Activated naive CD4-positive, alpha-beta T cell treated with anti-CD3 and anti-CD28 coated beads for 36 hours (primary cell): ENCODE measurements at regions of chr14 and their contacts with region 1.

Region 1: DNA sequence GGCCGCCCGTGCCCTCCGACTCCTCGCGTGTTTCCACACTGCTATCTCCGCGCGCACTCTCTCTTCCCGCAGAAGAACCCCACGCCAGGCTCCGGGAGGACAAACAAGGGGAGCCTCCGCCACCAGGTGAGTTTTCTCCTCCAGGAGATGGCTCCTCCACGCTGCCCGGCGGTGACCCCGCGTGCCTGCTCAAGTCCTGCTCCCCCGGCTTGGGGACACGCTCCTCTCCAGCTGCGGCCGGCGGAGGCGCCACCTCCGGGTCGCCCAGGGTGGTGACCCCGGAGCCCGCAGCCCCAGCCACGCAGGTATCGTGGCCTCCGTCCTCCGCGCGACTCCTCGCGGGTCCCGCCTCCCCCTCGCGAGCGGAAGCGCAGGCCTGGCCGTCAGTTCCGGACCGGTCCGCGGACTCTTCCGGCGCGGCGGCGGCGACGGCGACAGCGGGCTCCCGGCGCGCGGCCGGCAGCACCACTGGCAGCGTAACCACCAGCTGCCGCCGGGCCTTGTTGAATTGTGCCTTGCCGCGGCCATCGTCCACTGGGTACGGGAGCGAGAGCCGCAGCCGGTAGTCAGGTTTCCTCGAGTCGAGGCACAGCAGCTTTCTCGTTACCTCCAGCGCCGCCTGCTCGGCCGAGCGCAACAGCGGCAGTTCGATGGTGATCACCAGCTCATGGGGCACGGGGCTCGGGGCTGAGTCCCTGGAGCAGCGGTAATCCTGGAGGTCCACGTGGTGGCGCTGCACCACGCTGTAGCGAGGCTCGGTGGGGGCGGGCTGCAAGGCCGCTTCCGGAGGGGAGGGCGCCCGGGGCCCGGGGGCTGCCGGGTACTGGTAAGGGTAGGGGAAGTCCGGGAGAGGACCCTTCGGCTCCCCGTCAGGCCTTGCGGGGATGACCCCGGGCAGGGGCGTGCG is 1.2 kb downstream of the DNAAF2 start:
- DNase-seq: peak; percentile 96
- H3K4me3 Mint-ChIP-seq: peak overlapping the region; percentile 96
- H3K27ac Mint-ChIP-seq: peak overlapping the region; percentile 92
- H3K4me1 Mint-ChIP-seq: peaks cover 50% of the 10 kb centered on the region
- H3K27me3 Mint-ChIP-seq: no peaks in the 10 kb centered on the region

Region 2: DNA sequence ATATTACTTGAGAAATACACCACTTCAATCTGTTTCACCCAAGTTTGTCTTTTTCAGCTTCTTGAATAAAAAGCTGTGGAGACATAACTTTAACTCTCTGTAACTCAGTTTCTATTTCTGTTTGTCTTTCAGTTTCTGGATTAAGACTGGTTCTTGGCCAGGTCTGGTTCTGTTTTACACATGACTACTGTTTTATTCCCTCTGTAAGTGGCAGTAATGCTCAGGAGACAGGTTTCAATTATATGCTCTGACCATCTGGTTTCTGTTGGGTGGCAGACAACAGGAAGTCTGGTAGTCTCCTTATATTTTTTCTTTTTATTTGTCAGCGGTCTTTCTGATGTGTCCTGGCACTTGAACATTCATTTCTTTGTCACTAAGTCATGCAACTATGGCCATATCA is 150.6 kb before region 1 on chr14:
- CTCF ChIA-PET with region 1: no interaction called
- intact Hi-C with region 1: no loop called
- DNase-seq: no peak
- H3K4me3 Mint-ChIP-seq: no peak overlapping the region
- H3K27ac Mint-ChIP-seq: no peak overlapping the region
- H3K4me1 Mint-ChIP-seq: peaks cover 6% of the 10 kb centered on the region
- H3K27me3 Mint-ChIP-seq: peaks cover 3% of the 10 kb centered on the region

Region 3: GRCh38 chr14:49585803-49586672 is 47.9 kb before region 1 on chr14 and contains the start of gene RPS29:
- CTCF ChIA-PET with region 1: interaction called, 5 read pairs
- intact Hi-C with region 1: loop called (anchors 1 kb)
- DNase-seq: peak; percentile 99
- H3K4me3 Mint-ChIP-seq: peak within 1 kb of the TSS; percentile 87
- H3K27ac Mint-ChIP-seq: peak within 1 kb of the TSS; percentile 98
- H3K4me1 Mint-ChIP-seq: peaks cover 40% of the 10 kb centered on the region
- H3K27me3 Mint-ChIP-seq: peaks cover 3% of the 10 kb centered on the region
- total RNA-seq, gene RPS29: 1,858 to 2,382 TPM

Region 4: GRCh38 chr14:49607583-49607982 is 26.3 kb before region 1 on chr14:
- CTCF ChIA-PET with region 1: no interaction called
- intact Hi-C with region 1: no loop called
- DNase-seq: no peak
- H3K4me3 Mint-ChIP-seq: no peak overlapping the region
- H3K27ac Mint-ChIP-seq: no peak overlapping the region
- H3K4me1 Mint-ChIP-seq: peaks cover 7% of the 10 kb centered on the region
- H3K27me3 Mint-ChIP-seq: no peaks in the 10 kb centered on the region

Region 5: GRCh38 chr14:49692811-49693734 is 59.2 kb after region 1 on chr14 and contains the start of gene KLHDC1:
- CTCF ChIA-PET with region 1: interaction called, 5 read pairs
- intact Hi-C with region 1: loop called (anchors 1 kb)
- DNase-seq: peak; percentile 84
- H3K4me3 Mint-ChIP-seq: peak within 1 kb of the TSS; percentile 81
- H3K27ac Mint-ChIP-seq: peak within 1 kb of the TSS; percentile 62
- H3K4me1 Mint-ChIP-seq: peaks cover 34% of the 10 kb centered on the region
- H3K27me3 Mint-ChIP-seq: no peaks in the 10 kb centered on the region
- total RNA-seq, gene KLHDC1: 0.57 to 0.79 TPM

Region 6: GRCh38 chr14:49852301-49853157 is 218.6 kb after region 1 on chr14 and contains the start of gene NEMF:
- CTCF ChIA-PET with region 1: interaction called, 42 read pairs
- intact Hi-C with region 1: loop called (anchors 1 kb)
- DNase-seq: peak; percentile 90
- H3K4me3 Mint-ChIP-seq: peak within 1 kb of the TSS; percentile 98
- H3K27ac Mint-ChIP-seq: peak within 1 kb of the TSS; percentile 97
- H3K4me1 Mint-ChIP-seq: peaks cover 37% of the 10 kb centered on the region
- H3K27me3 Mint-ChIP-seq: no peaks in the 10 kb centered on the region
- total RNA-seq, gene NEMF: 45.5 to 47.0 TPM

Region 7: GRCh38 chr14:50060871-50061663 is 427.2 kb after region 1 on chr14:
- CTCF ChIA-PET with region 1: no interaction called
- intact Hi-C with region 1: loop called (anchors 1 kb)
- DNase-seq: peak; percentile 64
- H3K4me3 Mint-ChIP-seq: peak overlapping the region; percentile 85
- H3K27ac Mint-ChIP-seq: peak overlapping the region; percentile 98
- H3K4me1 Mint-ChIP-seq: peaks cover 75% of the 10 kb centered on the region
- H3K27me3 Mint-ChIP-seq: no peaks in the 10 kb centered on the region

Region 8: GRCh38 chr14:50116181-50116956 is 482.5 kb after region 1 on chr14 and contains the start of gene VCPKMT:
- CTCF ChIA-PET with region 1: interaction called, 3 read pairs
- intact Hi-C with region 1: loop called (anchors 1 kb)
- DNase-seq: peak; percentile 96
- H3K4me3 Mint-ChIP-seq: peak within 1 kb of the TSS; percentile 98
- H3K27ac Mint-ChIP-seq: peak within 1 kb of the TSS; percentile 94
- H3K4me1 Mint-ChIP-seq: peaks cover 32% of the 10 kb centered on the region
- H3K27me3 Mint-ChIP-seq: no peaks in the 10 kb centered on the region
- total RNA-seq, gene VCPKMT: 9.6 to 10.5 TPM

Region 9: GRCh38 chr14:50532502-50533240 is 898.8 kb after region 1 on chr14 and contains the start of gene MAP4K5:
- CTCF ChIA-PET with region 1: no interaction called
- intact Hi-C with region 1: loop called (anchors 1 kb)
- DNase-seq: peak; percentile 89
- H3K4me3 Mint-ChIP-seq: peak within 1 kb of the TSS; percentile 85
- H3K27ac Mint-ChIP-seq: peak within 1 kb of the TSS; percentile 72
- H3K4me1 Mint-ChIP-seq: peaks cover 45% of the 10 kb centered on the region
- H3K27me3 Mint-ChIP-seq: no peaks in the 10 kb centered on the region
- total RNA-seq, gene MAP4K5: 10.2 to 11.2 TPM